ENCODE measurements at regions of chr12 and their contacts with region 1.

Region 1: GRCh38 chr12:3275171-3276041 is 198.2 kb downstream of the TSPAN9 start:
- DNase-seq: peak; percentile 78
- ATAC-seq: peak; percentile 61 to 68

Region 2: GRCh38 chr12:3135522-3136461 is 139.6 kb before region 1 on chr12:
- intact Hi-C with region 1: loop called (anchors 1 to 5 kb)
- DNase-seq: no peak
- ATAC-seq: peak; percentile 28 to 32